Esophagus muscularis mucosa (tissue), 4 donors: ENCODE measurements at regions of chr4 and their contacts with region 1.

Region 1: GRCh38 chr4:128468123-128468989 is 180.7 kb upstream of the PGRMC2 start:
- DNase-seq: no peak
- H3K4me3 ChIP-seq: peak overlapping the region in 2 of 4 donors; percentile 14 to 25
- H3K27ac ChIP-seq: peak overlapping the region; percentile 9 to 49 (median 18)
- H3K4me1 ChIP-seq: peaks cover 9 to 17% (median 14%) of the 10 kb centered on the region in 4 donors
- H3K27me3 ChIP-seq: no peaks in the 10 kb centered on the region
- CTCF ChIP-seq: no peak
- EP300 ChIP-seq: no peak
- POLR2A ChIP-seq: no peak

Region 2: GRCh38 chr4:128528793-128529553 is 60.6 kb after region 1 on chr4:
- intact Hi-C with region 1: loop called (anchors 5 kb)
- DNase-seq: peak; percentile 91
- H3K4me3 ChIP-seq: no peak overlapping the region
- H3K27ac ChIP-seq: peak overlapping the region; percentile 51 to 73 (median 66)
- H3K4me1 ChIP-seq: peaks cover 18 to 43% (median 32%) of the 10 kb centered on the region in 4 donors
- H3K27me3 ChIP-seq: no peaks in the 10 kb centered on the region
- CTCF ChIP-seq: no peak
- EP300 ChIP-seq: peak; percentile 71
- POLR2A ChIP-seq: no peak